Calu3 (cell line): ENCODE measurements at regions of chr20 and their contacts with region 1.

Region 1: GRCh38 chr20:17445543-17445942 is 85.6 kb downstream of the BFSP1 start:
- DNase-seq: no peak
- H3K4me3 Mint-ChIP-seq: no peak overlapping the region
- H3K27ac Mint-ChIP-seq: no peak overlapping the region
- H3K4me1 Mint-ChIP-seq: no peaks in the 10 kb centered on the region
- H3K27me3 Mint-ChIP-seq: peaks cover 11% of the 10 kb centered on the region
- CTCF ChIP-seq: no peak

Region 2: GRCh38 chr20:18543932-18544331 is 1098.4 kb after region 1 on chr20:
- CTCF ChIA-PET with region 1: interaction called, 13 read pairs
- intact Hi-C with region 1: no loop called
- DNase-seq: peak; percentile 1
- H3K4me3 Mint-ChIP-seq: no peak overlapping the region
- H3K27ac Mint-ChIP-seq: no peak overlapping the region
- H3K4me1 Mint-ChIP-seq: no peaks in the 10 kb centered on the region
- H3K27me3 Mint-ChIP-seq: no peaks in the 10 kb centered on the region
- CTCF ChIP-seq: no peak